ENCODE measurements at regions of chr12 and their contacts with region 1.

Region 1: GRCh38 chr12:49707128-49707811 is at the start of gene FMNL3:
- DNase-seq: peak; percentile 100
- ATAC-seq: peak; percentile 97
- H3K4me3 Mint-ChIP-seq: peak within 1 kb of the TSS; percentile 97
- H3K27ac Mint-ChIP-seq: peak within 1 kb of the TSS; percentile 91
- H3K4me1 Mint-ChIP-seq: peaks cover 39% of the 10 kb centered on the region
- H3K27me3 Mint-ChIP-seq: peaks cover 20% of the 10 kb centered on the region
- total RNA-seq, gene FMNL3: 43.5 to 43.8 TPM

Region 2: DNA sequence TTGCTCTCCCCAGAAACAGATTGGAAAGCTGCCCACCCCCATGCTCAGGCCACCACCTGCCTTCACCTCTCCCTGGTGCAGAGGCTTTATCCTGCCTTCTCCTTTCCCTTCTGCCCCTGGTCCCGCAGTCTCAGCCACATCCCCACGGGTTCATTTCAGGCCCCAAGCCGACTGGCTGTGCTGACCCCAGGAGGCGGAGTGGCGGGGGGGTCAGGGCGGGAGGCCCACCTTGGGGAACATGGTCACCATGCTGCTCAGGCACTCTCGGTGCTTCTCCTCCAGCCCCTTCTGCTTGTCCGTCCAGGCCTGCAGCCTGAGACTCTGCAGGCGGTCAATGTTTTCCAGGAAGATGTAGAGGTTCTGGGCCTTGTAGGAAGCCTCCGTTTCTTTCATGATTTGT is 108.7 kb before region 1 on chr12:
- POLR2A ChIA-PET with region 1: no interaction called
- DNase-seq: no peak
- ATAC-seq: no peak
- H3K4me3 Mint-ChIP-seq: no peak overlapping the region
- H3K27ac Mint-ChIP-seq: no peak overlapping the region
- H3K4me1 Mint-ChIP-seq: peaks cover 1% of the 10 kb centered on the region
- H3K27me3 Mint-ChIP-seq: no peaks in the 10 kb centered on the region

Region 3: GRCh38 chr12:49655595-49656236 is 51.6 kb before region 1 on chr12:
- POLR2A ChIA-PET with region 1: interaction called, 12 read pairs
- DNase-seq: no peak
- ATAC-seq: no peak
- H3K4me3 Mint-ChIP-seq: no peak overlapping the region
- H3K27ac Mint-ChIP-seq: peak overlapping the region; percentile 72
- H3K4me1 Mint-ChIP-seq: peaks cover 20% of the 10 kb centered on the region
- H3K27me3 Mint-ChIP-seq: no peaks in the 10 kb centered on the region

Region 4: GRCh38 chr12:49662998-49663843 is 44.0 kb before region 1 on chr12:
- POLR2A ChIA-PET with region 1: interaction called, 12 read pairs
- DNase-seq: peak; percentile 65
- ATAC-seq: peak; percentile 98
- H3K4me3 Mint-ChIP-seq: peak overlapping the region; percentile 82
- H3K27ac Mint-ChIP-seq: peak overlapping the region; percentile 92
- H3K4me1 Mint-ChIP-seq: peaks cover 52% of the 10 kb centered on the region
- H3K27me3 Mint-ChIP-seq: no peaks in the 10 kb centered on the region

Measured in activated naive CD8-positive, alpha-beta T cell treated with anti-CD3 and anti-CD28 coated beads, Interleukin-2, amount 10 ng/mL, durations not matched to agents 7 days and 5 days (primary cell).